ENCODE measurements at regions of chr21 and their contacts with region 1.

Region 1: GRCh38 chr21:43789276-43790009 is at the start of gene RRP1:
- DNase-seq: peak; percentile 92
- H3K4me3 ChIP-seq: peak within 1 kb of the TSS; percentile 94
- H3K27ac ChIP-seq: peak within 1 kb of the TSS; percentile 48
- H3K4me1 ChIP-seq: peaks cover 15% of the 10 kb centered on the region
- CTCF ChIP-seq: peak; percentile 81
- total RNA-seq, gene RRP1: 45.2 and 50.3 TPM in 2 replicates

Region 2: DNA sequence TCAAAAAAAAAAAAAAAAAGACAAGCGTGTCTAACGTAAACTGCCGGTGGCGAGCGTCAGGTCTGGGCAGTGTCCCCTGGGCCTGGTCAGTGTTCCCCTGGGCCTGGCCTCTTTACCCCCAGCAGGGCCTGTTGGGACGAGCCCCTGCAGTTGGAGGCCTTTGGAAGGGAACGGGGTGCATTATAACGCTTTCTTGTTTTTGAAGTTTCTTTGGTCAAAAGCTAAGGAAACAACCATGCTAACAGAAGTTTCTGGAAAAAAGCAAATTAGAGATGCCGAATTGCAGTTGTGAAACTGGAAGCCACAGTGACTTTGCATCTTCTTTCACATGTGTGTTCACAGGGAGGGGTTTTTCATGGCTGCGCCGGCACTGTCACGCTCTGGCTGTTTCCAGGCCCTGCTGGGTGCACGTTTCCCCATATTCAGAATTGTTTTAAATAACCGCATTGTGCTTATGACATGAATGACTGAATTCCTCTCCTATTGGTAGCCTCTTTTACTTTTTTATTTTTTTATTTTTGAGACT is 15.9 kb after region 1 on chr21:
- CTCF ChIA-PET with region 1: no interaction called
- POLR2A ChIA-PET with region 1: interaction called, 4 read pairs
- intact Hi-C with region 1: loop called (anchors 1 kb)
- DNase-seq: peak; percentile 96
- H3K4me3 ChIP-seq: peak overlapping the region; percentile 20
- H3K27ac ChIP-seq: peak overlapping the region; percentile 96
- H3K4me1 ChIP-seq: peaks cover 56% of the 10 kb centered on the region
- CTCF ChIP-seq: no peak

Region 3: DNA sequence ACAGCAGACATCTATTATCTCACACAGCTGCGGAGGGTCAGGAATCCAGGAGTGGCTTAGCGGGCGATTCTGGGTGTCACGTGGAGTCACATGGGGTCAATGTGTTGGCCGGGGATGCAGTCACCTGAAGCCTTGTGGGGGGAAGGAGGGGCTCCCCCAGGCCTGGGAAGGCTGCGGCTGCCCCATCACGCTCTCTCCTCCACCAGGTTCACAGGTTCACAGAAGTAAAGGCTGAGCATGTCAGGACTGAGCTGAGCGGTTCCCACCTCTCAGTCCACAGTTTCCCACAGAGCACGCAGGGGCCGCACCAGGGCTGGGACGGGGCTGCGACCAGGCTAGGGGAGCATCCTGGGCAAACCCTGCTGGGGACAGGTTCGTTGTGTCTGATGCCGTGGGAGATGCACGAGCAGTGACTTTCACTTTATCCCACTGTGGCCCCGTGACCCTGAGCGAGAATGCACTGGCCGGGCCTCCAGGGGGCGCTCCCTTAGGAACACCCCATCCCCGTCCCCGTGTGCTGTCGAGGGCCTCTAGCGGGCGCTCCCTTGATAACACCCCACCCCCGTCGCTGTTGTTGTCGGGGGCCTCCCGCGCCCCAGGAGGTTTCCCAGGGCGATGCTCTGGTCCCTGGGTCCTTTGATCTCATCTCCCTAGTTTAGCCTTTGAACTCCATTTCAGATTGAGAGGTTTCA is 149.5 kb after region 1 on chr21:
- CTCF ChIA-PET with region 1: no interaction called
- POLR2A ChIA-PET with region 1: no interaction called
- intact Hi-C with region 1: loop called (anchors 1 kb)
- DNase-seq: peak; percentile 92
- H3K4me3 ChIP-seq: peak overlapping the region; percentile 66
- H3K27ac ChIP-seq: no peak overlapping the region
- H3K4me1 ChIP-seq: peaks cover 10% of the 10 kb centered on the region
- CTCF ChIP-seq: peak; percentile 99

Measured in OCI-LY7 (cell line).